ENCODE measurements at regions of chr5 and their contacts with region 1.

Region 1: DNA sequence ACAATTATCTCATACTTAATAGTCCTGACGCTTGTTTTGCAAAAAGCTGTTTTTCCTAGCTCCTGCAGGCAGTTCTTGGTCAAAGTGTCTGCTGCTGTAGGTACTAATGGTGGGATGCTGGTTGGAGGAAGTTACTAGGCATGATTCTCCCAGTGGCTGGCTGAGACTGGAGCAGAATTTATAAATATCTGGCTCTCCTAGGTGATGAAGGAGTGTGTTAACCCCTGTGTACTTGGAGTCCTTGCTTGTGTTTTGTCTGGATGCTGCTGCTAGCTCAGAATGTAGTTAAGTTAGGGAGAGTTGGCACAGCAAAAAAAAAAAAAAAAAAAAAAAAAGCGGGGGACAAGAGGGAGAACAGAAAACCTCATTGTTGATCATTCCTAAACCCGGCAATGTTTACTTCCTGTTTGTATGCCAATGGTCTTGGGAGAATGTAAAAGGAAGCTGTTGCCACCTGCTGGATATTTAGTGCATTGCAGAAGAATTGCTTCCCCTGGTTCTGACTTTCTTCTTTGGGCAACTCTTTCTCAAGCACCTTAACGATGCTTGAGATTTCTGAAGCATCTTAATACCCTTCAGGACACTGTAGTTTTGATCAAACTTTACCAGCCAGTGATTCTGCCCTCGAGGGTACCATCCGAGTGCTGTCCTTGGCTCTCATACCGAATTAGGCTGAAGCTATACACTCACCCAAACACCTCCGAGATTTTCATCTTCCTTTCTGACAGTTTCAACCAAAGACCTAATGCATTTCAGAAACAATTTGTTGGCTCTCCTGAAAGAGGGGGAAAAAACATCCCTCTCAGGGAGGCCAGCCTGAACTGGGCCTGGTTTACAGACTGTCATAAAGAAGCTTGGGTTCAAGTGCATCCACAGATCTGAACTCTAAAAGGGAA is 71.7 kb upstream of the WWC1 start:
- DNase-seq: no peak
- H3K4me3 ChIP-seq: peak overlapping the region; percentile 40
- H3K27ac ChIP-seq: no peak overlapping the region
- H3K4me1 ChIP-seq: peaks cover 58% of the 10 kb centered on the region
- H3K27me3 ChIP-seq: no peaks in the 10 kb centered on the region
- CTCF ChIP-seq: peak; percentile 89

Region 2: DNA sequence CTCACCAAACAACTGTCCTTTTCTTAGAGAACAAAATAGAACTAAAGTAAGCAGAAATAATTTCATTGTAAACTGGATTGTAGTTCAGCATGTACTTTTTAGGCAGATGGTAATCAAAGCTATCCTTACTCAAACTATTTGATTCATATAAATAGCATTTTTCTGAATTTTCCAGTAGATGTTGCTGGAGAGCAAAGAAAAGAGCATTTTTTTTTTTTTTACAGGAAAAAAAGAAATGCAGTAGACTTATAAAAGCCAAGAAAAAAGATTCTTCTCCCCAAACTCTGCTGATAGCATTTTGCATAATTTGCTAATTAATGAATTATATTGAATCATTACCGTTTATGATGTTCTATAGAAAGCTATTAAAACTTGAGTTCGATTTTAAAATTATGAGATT is 643.6 kb before region 1 on chr5:
- intact Hi-C with region 1: loop called (anchors 5 kb)
- DNase-seq: no peak
- H3K4me3 ChIP-seq: no peak overlapping the region
- H3K27ac ChIP-seq: no peak overlapping the region
- H3K4me1 ChIP-seq: peaks cover 13% of the 10 kb centered on the region
- H3K27me3 ChIP-seq: peaks cover 86% of the 10 kb centered on the region
- CTCF ChIP-seq: no peak

Region 3: GRCh38 chr5:167723254-167723871 is 496.4 kb before region 1 on chr5:
- intact Hi-C with region 1: loop called (anchors 5 kb)
- DNase-seq: peak; percentile 58
- H3K4me3 ChIP-seq: no peak overlapping the region
- H3K27ac ChIP-seq: no peak overlapping the region
- H3K4me1 ChIP-seq: peaks cover 3% of the 10 kb centered on the region
- H3K27me3 ChIP-seq: no peaks in the 10 kb centered on the region
- CTCF ChIP-seq: peak; percentile 94

Region 4: GRCh38 chr5:168114444-168115017 is 105.2 kb before region 1 on chr5:
- intact Hi-C with region 1: loop called (anchors 10 kb)
- DNase-seq: peak; percentile 28
- H3K4me3 ChIP-seq: no peak overlapping the region
- H3K27ac ChIP-seq: no peak overlapping the region
- H3K4me1 ChIP-seq: peaks cover 10% of the 10 kb centered on the region
- H3K27me3 ChIP-seq: peaks cover 3% of the 10 kb centered on the region
- CTCF ChIP-seq: peak; percentile 68

Region 5: GRCh38 chr5:168165221-168165965 is 54.4 kb before region 1 on chr5:
- intact Hi-C with region 1: no loop called
- DNase-seq: no peak
- H3K4me3 ChIP-seq: no peak overlapping the region
- H3K27ac ChIP-seq: peak overlapping the region; percentile 35
- H3K4me1 ChIP-seq: peaks cover 84% of the 10 kb centered on the region
- H3K27me3 ChIP-seq: peaks cover 10% of the 10 kb centered on the region
- CTCF ChIP-seq: no peak

Region 6: DNA sequence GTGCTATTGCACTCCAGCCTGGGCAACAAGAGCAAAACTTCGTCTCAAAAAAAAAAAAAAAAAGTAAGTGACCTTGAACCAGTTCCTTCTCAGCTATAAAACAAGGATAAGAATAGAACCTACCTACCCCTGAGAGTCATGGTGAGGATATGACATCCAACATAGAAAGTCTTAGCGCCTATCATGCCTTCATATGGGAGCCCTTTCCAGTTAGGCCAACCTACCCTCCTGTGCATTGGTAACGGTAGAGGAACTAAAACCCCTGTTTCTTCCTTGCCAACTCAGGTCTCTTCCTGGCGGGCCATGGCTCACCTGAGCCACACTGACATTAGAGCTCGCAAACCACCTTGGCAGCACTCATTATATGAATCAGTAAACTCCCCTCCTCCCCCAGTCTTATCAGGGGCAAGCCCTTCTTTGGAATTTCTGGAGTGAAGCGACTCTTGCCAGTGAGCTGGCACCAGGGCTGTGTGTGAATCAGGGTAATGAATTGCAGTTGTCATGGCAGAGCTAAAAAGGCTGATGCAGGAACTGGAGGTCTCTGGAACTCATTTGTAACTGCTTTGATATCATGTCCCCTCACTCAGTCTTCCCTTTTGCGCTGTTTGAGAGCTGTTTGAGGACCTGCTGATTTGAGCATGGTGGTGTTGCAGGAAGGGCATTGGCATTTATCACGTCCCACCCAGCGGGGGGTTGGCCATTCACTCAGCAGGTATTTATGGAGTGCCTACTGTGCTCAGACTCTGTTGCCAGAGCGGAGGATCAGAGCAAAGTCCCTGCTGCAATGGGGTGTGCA is 82.0 kb after region 1 on chr5:
- intact Hi-C with region 1: no loop called
- DNase-seq: no peak
- H3K4me3 ChIP-seq: no peak overlapping the region
- H3K27ac ChIP-seq: no peak overlapping the region
- H3K4me1 ChIP-seq: no peaks in the 10 kb centered on the region
- H3K27me3 ChIP-seq: peaks cover 31% of the 10 kb centered on the region
- CTCF ChIP-seq: no peak